ENCODE measurements at regions of chr16 and their contacts with region 1.

Region 1: DNA sequence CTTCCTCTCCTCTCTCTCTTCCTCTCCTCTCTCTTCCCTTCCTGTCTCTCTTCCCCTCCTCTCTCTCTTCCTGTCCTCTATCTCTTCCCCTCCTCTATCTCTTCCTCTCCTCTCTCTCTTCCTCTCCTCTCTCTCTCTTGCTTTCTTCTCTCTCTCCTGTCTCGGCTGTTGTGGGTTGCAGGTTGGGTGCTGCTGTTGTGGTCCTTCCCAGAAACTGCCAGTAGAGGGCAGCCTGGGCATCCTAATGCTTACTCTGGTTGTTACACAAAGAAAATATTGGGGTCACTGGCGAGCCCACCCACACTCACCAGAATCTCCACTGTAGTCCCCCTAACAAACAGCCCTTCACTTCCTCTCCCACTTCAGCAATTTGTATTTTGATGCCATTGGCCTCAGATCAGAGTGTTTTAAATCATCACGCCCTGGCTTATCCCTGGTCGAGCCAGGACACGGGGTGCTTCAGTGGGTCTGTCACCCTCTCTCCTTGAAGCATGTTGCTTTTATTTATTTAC is 4.9 kb upstream of the MMP15 start:
- DNase-seq: peak; percentile 55
- H3K4me3 ChIP-seq: no peak overlapping the region
- H3K27ac ChIP-seq: no peak overlapping the region
- H3K4me1 ChIP-seq: peaks cover 23% of the 10 kb centered on the region
- H3K27me3 ChIP-seq: no peaks in the 10 kb centered on the region
- CTCF ChIP-seq: peak; percentile 96

Region 2: DNA sequence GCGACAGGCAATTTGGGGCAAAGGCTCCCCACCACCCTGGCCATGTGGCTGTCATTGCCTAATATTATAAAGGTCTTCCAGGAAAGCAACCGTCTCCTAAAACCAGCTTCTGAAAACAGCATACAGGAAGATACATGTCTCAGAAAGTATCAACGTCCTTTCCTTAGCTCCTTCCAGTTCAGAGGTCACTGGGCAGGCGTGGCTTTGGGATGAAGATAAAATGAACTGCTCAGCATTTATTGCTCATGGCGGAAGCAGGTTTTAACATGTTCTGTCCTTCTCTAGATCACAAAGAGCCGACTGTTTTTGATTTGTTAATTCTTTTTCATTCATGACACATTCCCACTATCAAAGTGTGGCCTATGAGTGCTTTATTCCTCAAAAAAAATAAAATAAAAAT is 100.4 kb after region 1 on chr16:
- CTCF ChIA-PET with region 1: interaction called, 12 read pairs
- POLR2A ChIA-PET with region 1: no interaction called
- intact Hi-C with region 1: loop called (anchors 2 kb)
- DNase-seq: no peak
- H3K4me3 ChIP-seq: peak overlapping the region; percentile 8
- H3K27ac ChIP-seq: no peak overlapping the region
- H3K4me1 ChIP-seq: peaks cover 54% of the 10 kb centered on the region
- H3K27me3 ChIP-seq: no peaks in the 10 kb centered on the region
- CTCF ChIP-seq: no peak

Measured in A673 (cell line).